Esophagus muscularis mucosa (tissue), 4 donors: ENCODE measurements at regions of chr7 and their contacts with region 1.

Region 1: GRCh38 chr7:92206019-92206418 is 27.1 kb upstream of the LRRD1 start:
- DNase-seq: no peak
- H3K4me3 ChIP-seq: no peak overlapping the region
- H3K27ac ChIP-seq: no peak overlapping the region
- H3K4me1 ChIP-seq: no peaks in the 10 kb centered on the region
- H3K27me3 ChIP-seq: no peaks in the 10 kb centered on the region
- CTCF ChIP-seq: no peak
- EP300 ChIP-seq: no peak
- POLR2A ChIP-seq: no peak

Region 2: DNA sequence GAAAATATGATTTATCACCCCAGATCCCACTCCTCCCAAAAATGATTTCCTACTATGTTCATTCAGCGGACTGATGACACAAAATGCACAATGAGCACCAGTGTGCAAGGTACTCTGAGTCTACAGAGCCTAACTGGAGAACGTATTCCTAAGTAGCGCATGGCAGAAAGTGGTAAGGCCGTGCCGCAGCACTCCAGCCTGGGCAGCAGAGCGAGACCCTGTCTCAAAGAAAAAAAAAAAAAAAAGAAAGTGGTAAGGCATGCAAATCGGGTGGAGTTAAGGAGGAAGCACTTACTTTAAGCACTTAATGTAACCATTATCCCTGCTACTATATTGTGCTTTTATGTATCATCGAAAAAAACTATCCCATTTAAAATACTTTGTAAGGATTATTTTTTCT is 97.2 kb before region 1 on chr7:
- intact Hi-C with region 1: loop called (anchors 10 kb)
- DNase-seq: no peak
- H3K4me3 ChIP-seq: no peak overlapping the region
- H3K27ac ChIP-seq: no peak overlapping the region
- H3K4me1 ChIP-seq: no peaks in the 10 kb centered on the region
- H3K27me3 ChIP-seq: no peaks in the 10 kb centered on the region
- CTCF ChIP-seq: no peak
- EP300 ChIP-seq: no peak
- POLR2A ChIP-seq: no peak

Region 3: DNA sequence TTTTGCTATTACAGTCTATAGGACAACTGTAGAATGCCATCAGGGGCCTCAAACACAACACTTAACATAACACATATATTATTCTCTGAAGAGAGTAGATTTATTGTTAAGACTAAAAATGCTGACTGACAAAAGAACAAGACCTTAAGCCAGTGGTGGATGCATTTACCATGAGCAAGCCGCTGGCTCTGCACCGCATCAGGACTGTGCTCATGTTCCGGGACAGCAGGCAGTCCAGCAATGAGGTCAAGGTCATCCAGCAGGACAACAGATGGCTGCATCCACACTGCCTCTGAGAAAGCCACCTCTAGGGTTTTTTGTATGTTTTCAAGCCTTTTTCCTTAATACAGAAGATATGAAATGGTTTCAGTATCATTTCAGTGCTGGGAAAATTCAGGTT is 298.5 kb after region 1 on chr7:
- intact Hi-C with region 1: loop called (anchors 10 kb)
- DNase-seq: no peak
- H3K4me3 ChIP-seq: no peak overlapping the region
- H3K27ac ChIP-seq: no peak overlapping the region
- H3K4me1 ChIP-seq: no peaks in the 10 kb centered on the region
- H3K27me3 ChIP-seq: no peaks in the 10 kb centered on the region
- CTCF ChIP-seq: no peak
- EP300 ChIP-seq: no peak
- POLR2A ChIP-seq: no peak